Activated naive CD4-positive, alpha-beta T cell treated with anti-CD3 and anti-CD28 coated beads for 36 hours (primary cell): ENCODE measurements at regions of chr2 and their contacts with region 1.

Region 1: DNA sequence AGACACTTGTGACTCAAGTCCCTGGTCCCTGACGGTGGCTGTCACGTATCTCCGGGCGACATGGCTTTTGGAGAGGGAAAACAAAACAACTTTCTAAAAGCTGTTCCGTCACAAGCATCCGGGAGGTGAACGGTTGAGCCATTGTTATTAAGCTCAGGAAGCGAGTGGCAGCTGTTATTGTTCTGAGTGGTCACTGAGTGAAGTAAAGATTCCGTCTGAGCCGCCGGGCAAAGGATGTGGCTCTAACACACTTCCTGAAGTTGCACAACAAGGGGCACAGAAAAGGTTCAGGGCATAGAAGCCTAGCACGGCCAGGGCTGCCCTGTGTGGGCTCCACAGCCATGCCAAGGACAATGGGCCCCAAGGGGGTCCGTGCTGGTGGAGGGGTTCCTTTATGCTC is 24.3 kb downstream of the INPP5D start:
- DNase-seq: peak; percentile 79
- H3K4me3 Mint-ChIP-seq: peak overlapping the region; percentile 58
- H3K27ac Mint-ChIP-seq: peak overlapping the region; percentile 96
- H3K4me1 Mint-ChIP-seq: peaks cover 80% of the 10 kb centered on the region
- H3K27me3 Mint-ChIP-seq: no peaks in the 10 kb centered on the region

Region 2: DNA sequence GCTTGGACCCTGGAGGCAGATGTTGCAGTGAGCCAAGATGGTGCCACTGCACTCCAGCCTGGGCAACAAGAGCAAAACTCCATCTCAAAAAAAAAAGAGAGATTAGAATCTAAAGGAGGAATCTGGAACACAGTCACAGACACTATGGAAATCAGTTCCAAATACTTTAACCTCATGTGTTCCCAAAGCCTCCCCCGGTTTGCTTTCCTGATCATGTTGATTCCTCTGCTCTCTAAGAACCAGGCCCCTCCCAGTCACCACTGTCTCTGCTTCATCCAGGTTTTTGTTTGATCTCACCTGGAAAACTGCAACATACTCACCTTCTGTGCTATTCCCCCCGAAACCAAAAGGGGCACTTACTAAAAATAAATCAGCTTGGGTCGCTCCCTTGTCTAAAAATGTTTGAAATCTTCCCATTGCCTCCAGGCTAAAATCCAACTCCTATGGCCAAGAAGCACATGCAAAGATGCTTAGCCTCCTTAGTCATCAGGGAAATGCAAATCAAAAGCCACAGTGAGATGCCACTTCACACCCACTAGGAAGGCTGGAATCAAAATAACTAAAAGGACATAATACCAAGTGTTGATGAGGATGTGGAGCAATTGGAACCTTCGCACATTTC is 58.2 kb before region 1 on chr2:
- CTCF ChIA-PET with region 1: no interaction called
- intact Hi-C with region 1: no loop called
- DNase-seq: no peak
- H3K4me3 Mint-ChIP-seq: no peak overlapping the region
- H3K27ac Mint-ChIP-seq: no peak overlapping the region
- H3K4me1 Mint-ChIP-seq: no peaks in the 10 kb centered on the region
- H3K27me3 Mint-ChIP-seq: no peaks in the 10 kb centered on the region

Region 3: GRCh38 chr2:233053928-233054784 is 30.3 kb before region 1 on chr2:
- CTCF ChIA-PET with region 1: interaction called, 41 read pairs
- intact Hi-C with region 1: no loop called
- DNase-seq: peak; percentile 82
- H3K4me3 Mint-ChIP-seq: no peak overlapping the region
- H3K27ac Mint-ChIP-seq: no peak overlapping the region
- H3K4me1 Mint-ChIP-seq: peaks cover 8% of the 10 kb centered on the region
- H3K27me3 Mint-ChIP-seq: no peaks in the 10 kb centered on the region

Region 4: DNA sequence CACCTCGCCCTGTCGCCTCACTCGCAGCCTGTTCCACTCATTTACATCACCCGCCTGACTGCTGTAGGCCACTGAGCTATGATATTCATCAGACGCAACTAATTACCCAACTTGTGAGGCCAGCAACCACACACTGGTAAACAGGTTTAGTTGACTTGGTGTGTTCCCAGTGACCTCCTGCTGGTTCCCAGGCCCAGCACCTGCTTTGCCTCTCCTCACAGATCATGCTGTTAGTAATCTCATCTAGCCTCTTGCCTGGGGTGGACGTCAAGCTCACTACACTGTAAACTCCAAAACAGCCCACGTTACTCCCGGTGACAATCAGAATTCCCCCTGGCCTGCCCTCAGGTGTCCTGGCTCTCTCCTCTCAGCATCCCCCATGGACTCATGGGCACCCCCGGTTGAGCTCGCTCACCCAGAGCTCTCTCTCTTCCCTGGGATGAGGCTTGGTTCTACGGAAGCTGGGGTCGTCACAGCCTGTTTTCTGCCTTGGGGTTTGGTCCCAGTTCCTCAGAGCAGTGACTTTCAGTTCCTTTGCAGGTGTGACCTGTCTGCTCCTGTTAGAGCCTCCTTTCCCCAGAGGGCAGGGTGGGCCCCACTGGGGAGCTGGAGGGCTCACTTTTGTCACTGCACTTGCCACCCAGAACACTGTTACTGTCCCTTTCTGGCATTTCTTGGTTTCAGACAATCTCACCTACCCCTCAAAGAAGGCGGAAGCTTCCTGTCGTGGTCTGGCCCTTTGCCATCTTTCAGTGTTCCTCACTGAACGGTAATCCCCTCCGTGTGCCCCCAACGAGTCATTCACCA is 15.9 kb after region 1 on chr2:
- CTCF ChIA-PET with region 1: interaction called, 4 read pairs
- intact Hi-C with region 1: loop called (anchors 1 kb)
- DNase-seq: peak; percentile 87
- H3K4me3 Mint-ChIP-seq: peak overlapping the region; percentile 32
- H3K27ac Mint-ChIP-seq: peak overlapping the region; percentile 66
- H3K4me1 Mint-ChIP-seq: peaks cover 63% of the 10 kb centered on the region
- H3K27me3 Mint-ChIP-seq: no peaks in the 10 kb centered on the region

Region 5: GRCh38 chr2:233267516-233268245 is 183.2 kb after region 1 on chr2:
- CTCF ChIA-PET with region 1: no interaction called
- intact Hi-C with region 1: loop called (anchors 1 kb)
- DNase-seq: peak; percentile 88
- H3K4me3 Mint-ChIP-seq: peak overlapping the region; percentile 64
- H3K27ac Mint-ChIP-seq: peak overlapping the region; percentile 95
- H3K4me1 Mint-ChIP-seq: peaks cover 55% of the 10 kb centered on the region
- H3K27me3 Mint-ChIP-seq: no peaks in the 10 kb centered on the region

Region 6: GRCh38 chr2:233418761-233419625 is 334.5 kb after region 1 on chr2:
- CTCF ChIA-PET with region 1: no interaction called
- intact Hi-C with region 1: loop called (anchors 5 kb)
- DNase-seq: peak; percentile 67
- H3K4me3 Mint-ChIP-seq: peak overlapping the region; percentile 67
- H3K27ac Mint-ChIP-seq: peak overlapping the region; percentile 88
- H3K4me1 Mint-ChIP-seq: peaks cover 97% of the 10 kb centered on the region
- H3K27me3 Mint-ChIP-seq: no peaks in the 10 kb centered on the region

Region 7: GRCh38 chr2:234494361-234495250 is 1410.1 kb after region 1 on chr2:
- CTCF ChIA-PET with region 1: no interaction called
- intact Hi-C with region 1: loop called (anchors 5 kb)
- DNase-seq: no peak
- H3K4me3 Mint-ChIP-seq: peak overlapping the region; percentile 90
- H3K27ac Mint-ChIP-seq: peak overlapping the region; percentile 89
- H3K4me1 Mint-ChIP-seq: peaks cover 48% of the 10 kb centered on the region
- H3K27me3 Mint-ChIP-seq: no peaks in the 10 kb centered on the region